Activated CD4-positive, alpha-beta memory T cell treated with anti-CD3 and anti-CD28 coated beads for 36 hours (primary cell): ENCODE measurements at regions of chr2 and their contacts with region 1.

Region 1: DNA sequence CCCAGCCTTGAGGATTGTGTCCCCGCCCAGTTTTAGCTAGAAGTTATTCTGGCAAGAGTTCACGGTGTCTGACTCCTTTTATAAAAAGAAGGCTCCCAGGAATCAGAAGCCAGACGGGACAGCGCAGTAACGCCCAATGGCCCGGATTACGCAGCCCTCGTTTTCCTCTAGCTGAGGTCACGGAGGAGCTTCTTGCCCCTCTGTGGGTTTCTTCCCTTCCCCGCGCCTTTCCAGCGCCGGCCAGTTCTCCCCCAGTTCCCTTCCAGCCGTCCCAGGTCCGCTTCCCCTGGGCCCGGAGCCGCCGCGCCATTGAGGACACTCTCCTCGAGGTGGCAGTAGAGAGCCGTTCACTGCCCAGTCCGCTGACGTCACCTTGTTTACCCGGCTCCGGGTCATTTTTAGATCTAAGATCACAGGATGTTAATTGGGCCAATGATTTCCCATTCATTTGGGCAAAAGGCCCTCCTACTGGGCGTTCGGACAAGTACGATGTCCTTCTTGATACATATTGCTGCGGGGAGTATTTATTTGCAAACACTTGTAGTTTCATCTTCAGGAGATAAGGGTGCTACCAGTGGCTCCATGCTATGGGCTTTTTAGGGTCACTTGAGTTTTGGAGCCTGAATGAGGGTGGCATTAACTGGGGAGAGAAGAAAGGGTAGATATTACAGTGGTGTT is 81.5 kb upstream of the PPM1B start:
- DNase-seq: peak; percentile 90
- H3K4me3 Mint-ChIP-seq: peak overlapping the region; percentile 64
- H3K27ac Mint-ChIP-seq: peak overlapping the region; percentile 6
- H3K4me1 Mint-ChIP-seq: peaks cover 11% of the 10 kb centered on the region
- H3K27me3 Mint-ChIP-seq: no peaks in the 10 kb centered on the region

Region 2: GRCh38 chr2:44098050-44098449 is 10.9 kb after region 1 on chr2:
- CTCF ChIA-PET with region 1: interaction called, 17 read pairs
- POLR2A ChIA-PET with region 1: no interaction called
- intact Hi-C with region 1: no loop called
- DNase-seq: peak; percentile 25
- H3K4me3 Mint-ChIP-seq: no peak overlapping the region
- H3K27ac Mint-ChIP-seq: no peak overlapping the region
- H3K4me1 Mint-ChIP-seq: peaks cover 10% of the 10 kb centered on the region
- H3K27me3 Mint-ChIP-seq: no peaks in the 10 kb centered on the region

Region 3: GRCh38 chr2:44167940-44168680 is 80.9 kb after region 1 on chr2:
- CTCF ChIA-PET with region 1: interaction called, 5 read pairs
- POLR2A ChIA-PET with region 1: interaction called, 6 read pairs
- intact Hi-C with region 1: loop called (anchors 1 kb)
- DNase-seq: peak; percentile 98
- H3K4me3 Mint-ChIP-seq: peak overlapping the region; percentile 87
- H3K27ac Mint-ChIP-seq: peak overlapping the region; percentile 99
- H3K4me1 Mint-ChIP-seq: peaks cover 34% of the 10 kb centered on the region
- H3K27me3 Mint-ChIP-seq: no peaks in the 10 kb centered on the region

Region 4: DNA sequence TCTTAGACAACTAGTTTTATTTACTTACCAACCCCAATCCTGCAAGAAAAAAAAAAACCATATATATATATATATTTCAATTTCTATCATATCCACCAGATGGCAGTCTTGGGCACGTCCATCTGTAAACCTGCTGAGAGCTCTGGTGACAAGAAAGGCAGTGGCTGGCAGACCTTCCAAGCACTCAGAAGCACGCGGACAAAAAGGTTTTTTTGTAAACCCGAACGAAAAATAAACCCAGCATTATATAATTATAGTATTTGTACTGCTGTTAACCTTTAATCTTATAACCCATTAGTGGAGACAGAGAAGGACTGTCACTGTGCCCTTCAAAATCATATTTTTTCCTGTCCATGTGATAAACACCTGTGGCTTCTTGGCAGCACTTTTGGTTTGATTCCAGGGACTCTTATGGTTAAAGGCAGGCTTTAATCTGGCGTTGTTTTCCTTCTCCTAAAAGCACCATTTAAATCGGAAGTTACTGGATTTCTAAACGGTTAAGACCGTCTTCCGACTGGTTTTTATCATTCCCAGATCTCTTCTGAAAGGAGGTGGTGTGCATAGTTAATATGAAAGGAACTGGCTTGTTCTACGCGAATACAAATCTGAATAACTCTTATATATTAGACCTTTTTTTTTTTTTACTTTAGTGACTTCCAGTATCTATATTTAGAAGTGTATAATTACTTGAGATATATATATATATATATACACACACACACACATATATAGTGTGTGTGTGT is 157.1 kb after region 1 on chr2:
- CTCF ChIA-PET with region 1: interaction called, 27 read pairs
- POLR2A ChIA-PET with region 1: no interaction called
- intact Hi-C with region 1: loop called (anchors 1 kb)
- DNase-seq: peak; percentile 64
- H3K4me3 Mint-ChIP-seq: peak overlapping the region; percentile 66
- H3K27ac Mint-ChIP-seq: no peak overlapping the region
- H3K4me1 Mint-ChIP-seq: peaks cover 12% of the 10 kb centered on the region
- H3K27me3 Mint-ChIP-seq: no peaks in the 10 kb centered on the region

Region 5: GRCh38 chr2:44291281-44292248 is 204.4 kb after region 1 on chr2:
- CTCF ChIA-PET with region 1: interaction called, 5 read pairs
- POLR2A ChIA-PET with region 1: no interaction called
- intact Hi-C with region 1: loop called (anchors 1 kb)
- DNase-seq: no peak
- H3K4me3 Mint-ChIP-seq: no peak overlapping the region
- H3K27ac Mint-ChIP-seq: no peak overlapping the region
- H3K4me1 Mint-ChIP-seq: peaks cover 9% of the 10 kb centered on the region
- H3K27me3 Mint-ChIP-seq: peaks cover 5% of the 10 kb centered on the region

Region 6: DNA sequence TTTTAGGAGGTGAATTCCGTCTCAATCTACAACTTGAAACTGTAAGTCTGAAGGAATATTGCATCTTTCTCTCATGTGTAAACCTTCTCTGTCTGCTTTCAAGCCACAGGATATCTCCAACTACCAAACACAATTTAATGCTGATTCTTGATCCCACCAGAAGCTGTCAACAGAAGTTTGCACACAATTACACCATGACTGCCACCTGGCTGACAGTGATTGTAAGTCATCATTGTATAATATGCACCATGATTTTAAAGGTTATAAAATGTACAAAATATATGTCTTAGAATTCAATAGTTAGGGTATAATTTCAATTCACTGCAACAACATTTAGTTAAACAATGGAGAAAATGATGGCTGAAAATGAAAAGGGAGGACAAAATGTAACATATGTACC is 255.7 kb after region 1 on chr2:
- CTCF ChIA-PET with region 1: interaction called, 6 read pairs
- POLR2A ChIA-PET with region 1: no interaction called
- intact Hi-C with region 1: loop called (anchors 2 kb)
- DNase-seq: no peak
- H3K4me3 Mint-ChIP-seq: no peak overlapping the region
- H3K27ac Mint-ChIP-seq: no peak overlapping the region
- H3K4me1 Mint-ChIP-seq: no peaks in the 10 kb centered on the region
- H3K27me3 Mint-ChIP-seq: no peaks in the 10 kb centered on the region

Region 7: GRCh38 chr2:44955593-44956392 is 868.6 kb after region 1 on chr2:
- CTCF ChIA-PET with region 1: interaction called, 3 read pairs
- POLR2A ChIA-PET with region 1: no interaction called
- intact Hi-C with region 1: loop called (anchors 1 kb)
- DNase-seq: peak; percentile 83
- H3K4me3 Mint-ChIP-seq: no peak overlapping the region
- H3K27ac Mint-ChIP-seq: no peak overlapping the region
- H3K4me1 Mint-ChIP-seq: peaks cover 9% of the 10 kb centered on the region
- H3K27me3 Mint-ChIP-seq: peaks cover 47% of the 10 kb centered on the region